Left ventricle myocardium inferior (tissue), 1 donor: ENCODE measurements at regions of chr17 and their contacts with region 1.

Region 1: GRCh38 chr17:74212913-74213791 is at the start of gene TTYH2:
- DNase-seq: peak; percentile 89
- H3K4me3 ChIP-seq: peak within 1 kb of the TSS; percentile 72
- H3K27ac ChIP-seq: peak within 1 kb of the TSS; percentile 93
- H3K4me1 ChIP-seq: peaks cover 84% of the 10 kb centered on the region
- H3K27me3 ChIP-seq: no peaks in the 10 kb centered on the region
- CTCF ChIP-seq: peak; percentile 22
- total RNA-seq, gene TTYH2: 28.1 TPM

Region 2: GRCh38 chr17:74296548-74296936 is 83.4 kb after region 1 on chr17:
- intact Hi-C with region 1: loop called (anchors 5 kb)
- DNase-seq: peak; percentile 70
- H3K4me3 ChIP-seq: no peak overlapping the region
- H3K27ac ChIP-seq: peak overlapping the region; percentile 91
- H3K4me1 ChIP-seq: peaks cover 15% of the 10 kb centered on the region
- H3K27me3 ChIP-seq: peaks cover 7% of the 10 kb centered on the region
- CTCF ChIP-seq: peak; percentile 79

Region 3: DNA sequence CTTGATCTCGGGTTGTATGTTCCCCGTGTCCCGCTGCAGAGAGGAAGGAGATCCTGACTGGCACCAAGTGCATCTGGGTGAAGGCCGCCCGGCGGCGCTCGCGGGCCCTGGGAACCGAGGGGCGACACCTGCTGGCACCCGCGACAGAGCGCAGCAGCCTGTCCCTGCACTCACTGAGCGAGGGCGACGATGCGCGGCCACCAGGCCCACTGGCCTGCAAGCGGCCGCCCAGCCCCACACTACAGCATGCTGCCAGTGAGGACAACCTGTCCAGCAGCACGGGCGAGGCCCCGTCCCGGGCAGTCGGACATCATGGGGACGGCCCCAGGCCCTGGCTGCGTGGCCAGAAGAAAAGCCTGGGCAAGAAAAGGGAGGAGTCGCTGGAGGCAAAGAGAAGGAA is 141.0 kb after region 1 on chr17:
- intact Hi-C with region 1: no loop called
- DNase-seq: peak; percentile 45
- H3K4me3 ChIP-seq: no peak overlapping the region
- H3K27ac ChIP-seq: no peak overlapping the region
- H3K4me1 ChIP-seq: peaks cover 18% of the 10 kb centered on the region
- H3K27me3 ChIP-seq: peaks cover 95% of the 10 kb centered on the region
- CTCF ChIP-seq: peak; percentile 65